IMR-90 (cell line): ENCODE measurements at regions of chr4 and their contacts with region 1.

Region 1: DNA sequence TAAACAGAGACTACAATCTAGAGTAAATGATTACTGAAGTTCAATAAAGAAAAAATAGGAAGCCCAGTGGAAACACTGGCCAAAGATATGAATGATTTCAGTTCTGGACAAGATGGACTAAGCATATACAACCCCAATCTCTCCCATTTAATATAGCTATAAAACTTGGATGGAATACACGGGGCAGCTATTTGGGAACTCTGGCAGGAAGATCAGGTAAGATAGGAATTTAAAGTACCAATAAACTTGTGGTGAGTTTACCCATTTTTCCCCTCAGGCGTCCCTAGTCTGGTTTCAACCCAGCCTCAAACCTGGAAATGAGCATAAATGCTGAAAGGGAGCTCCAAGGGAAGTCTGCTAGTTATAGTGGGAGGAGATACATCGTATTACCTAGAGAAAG is 20.4 kb downstream of the NUP54 start:
- DNase-seq: no peak
- ATAC-seq: no peak
- H3K4me3 ChIP-seq: no peak overlapping the region
- H3K27ac ChIP-seq: no peak overlapping the region
- H3K4me1 ChIP-seq: no peaks in the 10 kb centered on the region
- H3K27me3 ChIP-seq: no peaks in the 10 kb centered on the region
- CTCF ChIP-seq: no peak
- POLR2A ChIP-seq: no peak
- RAD21 ChIP-seq: no peak

Region 2: DNA sequence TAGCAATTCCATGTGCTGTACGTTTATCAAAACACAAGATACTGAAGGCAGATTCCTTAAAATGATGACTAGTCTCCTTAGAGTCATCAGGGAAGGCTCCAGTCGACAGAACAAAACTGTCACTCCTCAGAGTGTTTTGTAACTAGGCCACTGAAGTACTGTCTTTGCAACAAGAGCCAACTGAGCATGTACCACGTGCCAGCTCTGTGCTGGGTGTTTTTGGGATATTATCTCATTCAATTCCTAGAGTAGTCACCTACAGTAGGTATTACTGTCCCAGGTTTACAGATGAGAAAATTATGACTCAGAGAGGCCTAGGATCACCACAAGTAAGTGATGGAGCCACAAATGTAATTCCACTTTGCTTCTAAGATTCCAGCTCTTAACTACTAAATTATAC is 38.7 kb after region 1 on chr4:
- CTCF ChIA-PET with region 1: no interaction called
- POLR2A ChIA-PET with region 1: no interaction called
- dilution Hi-C with region 1: no loop called
- in situ Hi-C with region 1: no loop called
- intact Hi-C with region 1: loop called (anchors 1 kb)
- DNase-seq: no peak
- ATAC-seq: no peak
- H3K4me3 ChIP-seq: no peak overlapping the region
- H3K27ac ChIP-seq: no peak overlapping the region
- H3K4me1 ChIP-seq: no peaks in the 10 kb centered on the region
- H3K27me3 ChIP-seq: no peaks in the 10 kb centered on the region
- CTCF ChIP-seq: no peak
- POLR2A ChIP-seq: no peak
- RAD21 ChIP-seq: no peak